Caco-2 (cell line): ENCODE measurements at regions of chr10 and their contacts with region 1.

Region 1: GRCh38 chr10:70461215-70461986 is 17.2 kb upstream of the PALD1 start:
- DNase-seq: peak; percentile 76 to 81
- H3K4me3 ChIP-seq: no peak overlapping the region
- H3K4me3 Mint-ChIP-seq: no peak overlapping the region
- H3K27ac Mint-ChIP-seq: no peak overlapping the region
- H3K4me1 ChIP-seq: no peaks in the 10 kb centered on the region; the same call in 1 of the 2 replicates
- H3K4me1 Mint-ChIP-seq: peaks cover 14% of the 10 kb centered on the region
- H3K27me3 ChIP-seq: no peaks in the 10 kb centered on the region
- H3K27me3 Mint-ChIP-seq: no peaks in the 10 kb centered on the region
- CTCF ChIP-seq: peak; percentile 97 to 99

Region 2: GRCh38 chr10:70084189-70084588 is 377.2 kb before region 1 on chr10:
- CTCF ChIA-PET with region 1: no interaction called
- POLR2A ChIA-PET with region 1: no interaction called
- intact Hi-C with region 1: no loop called
- DNase-seq: peak; percentile 45 to 53
- H3K4me3 ChIP-seq: no peak overlapping the region
- H3K4me3 Mint-ChIP-seq: no peak overlapping the region
- H3K27ac Mint-ChIP-seq: no peak overlapping the region
- H3K4me1 ChIP-seq: peaks cover 46% of the 10 kb centered on the region
- H3K4me1 Mint-ChIP-seq: peaks cover 30% of the 10 kb centered on the region
- H3K27me3 ChIP-seq: no peaks in the 10 kb centered on the region
- H3K27me3 Mint-ChIP-seq: peaks cover 6% of the 10 kb centered on the region
- CTCF ChIP-seq: peak; percentile 25 to 52

Region 3: DNA sequence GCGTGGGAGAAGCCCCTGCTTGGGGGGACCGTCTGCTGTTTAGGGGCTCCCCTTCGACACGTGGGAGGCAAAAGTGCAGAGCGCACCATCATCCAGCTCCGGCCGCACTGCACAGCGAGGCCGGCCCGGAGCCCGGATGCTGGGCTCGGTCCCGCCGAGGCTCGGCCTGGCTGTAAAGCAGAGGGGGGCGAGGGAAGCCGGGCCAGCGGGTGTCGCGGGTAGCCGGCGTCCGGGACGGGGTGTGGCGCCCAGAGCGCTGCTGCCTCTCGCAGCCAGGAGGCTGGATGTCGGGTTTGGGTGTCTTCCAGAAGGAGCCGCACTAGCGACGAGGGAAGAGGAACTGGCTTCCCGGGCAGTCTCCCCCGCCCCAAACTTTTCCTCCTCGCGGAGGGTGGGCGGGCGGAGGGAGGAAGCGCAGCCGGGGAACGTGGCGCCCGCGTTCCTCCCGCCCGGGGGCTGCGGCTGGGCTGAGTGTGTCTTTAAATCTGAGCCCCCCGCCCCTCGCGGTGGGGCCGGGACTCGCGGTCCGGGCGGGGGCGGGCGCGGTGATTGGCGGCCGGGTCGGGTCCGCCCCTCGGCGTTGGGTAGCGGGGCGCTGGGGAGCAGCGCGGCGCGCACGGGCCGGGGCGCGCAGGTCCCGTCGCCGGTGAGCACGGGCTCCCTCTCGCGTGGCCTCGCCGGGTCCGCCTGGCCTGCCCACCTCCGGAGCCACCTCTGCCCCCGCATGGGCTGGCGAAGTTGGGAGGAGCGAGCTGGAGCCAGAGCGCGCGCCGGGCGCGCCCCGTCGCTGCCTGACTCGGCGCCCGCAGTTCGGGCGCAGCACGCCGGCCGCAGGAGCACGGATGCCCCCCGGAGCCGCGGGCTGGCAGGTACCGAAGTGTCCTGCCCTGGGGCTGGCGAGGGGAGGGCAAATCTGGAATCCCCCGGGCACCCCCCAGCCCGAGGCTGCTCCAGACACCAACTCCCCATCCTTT is 17.1 kb after region 1 on chr10 and contains the start of gene PALD1:
- CTCF ChIA-PET with region 1: interaction called, 14 read pairs
- POLR2A ChIA-PET with region 1: interaction called, 3 read pairs
- intact Hi-C with region 1: loop called (anchors 1 kb)
- DNase-seq: peak; percentile 82 to 89
- H3K4me3 ChIP-seq: peak within 1 kb of the TSS; percentile 65
- H3K4me3 Mint-ChIP-seq: peak within 1 kb of the TSS; percentile 87
- H3K27ac Mint-ChIP-seq: peak within 1 kb of the TSS; percentile 40
- H3K4me1 ChIP-seq: peaks cover 16% of the 10 kb centered on the region
- H3K4me1 Mint-ChIP-seq: peaks cover 9% of the 10 kb centered on the region
- H3K27me3 ChIP-seq: no peaks in the 10 kb centered on the region
- H3K27me3 Mint-ChIP-seq: no peaks in the 10 kb centered on the region
- CTCF ChIP-seq: peak in 1 of 2 experiments; percentile 45
- total RNA-seq, gene PALD1: 8.9 and 10.3 TPM in 2 replicates

Region 4: GRCh38 chr10:70540089-70540788 is 78.8 kb after region 1 on chr10:
- CTCF ChIA-PET with region 1: interaction called, 18 read pairs
- POLR2A ChIA-PET with region 1: no interaction called
- intact Hi-C with region 1: loop called (anchors 1 kb)
- DNase-seq: peak in 1 of 2 experiments; percentile 67
- H3K4me3 ChIP-seq: no peak overlapping the region
- H3K4me3 Mint-ChIP-seq: no peak overlapping the region
- H3K27ac Mint-ChIP-seq: no peak overlapping the region
- H3K4me1 ChIP-seq: no peaks in the 10 kb centered on the region
- H3K4me1 Mint-ChIP-seq: no peaks in the 10 kb centered on the region
- H3K27me3 ChIP-seq: no peaks in the 10 kb centered on the region
- H3K27me3 Mint-ChIP-seq: no peaks in the 10 kb centered on the region
- CTCF ChIP-seq: peak; percentile 86 to 94